Left colon (tissue), 2 donors: ENCODE measurements at regions of chr6 and their contacts with region 1.

Region 1: DNA sequence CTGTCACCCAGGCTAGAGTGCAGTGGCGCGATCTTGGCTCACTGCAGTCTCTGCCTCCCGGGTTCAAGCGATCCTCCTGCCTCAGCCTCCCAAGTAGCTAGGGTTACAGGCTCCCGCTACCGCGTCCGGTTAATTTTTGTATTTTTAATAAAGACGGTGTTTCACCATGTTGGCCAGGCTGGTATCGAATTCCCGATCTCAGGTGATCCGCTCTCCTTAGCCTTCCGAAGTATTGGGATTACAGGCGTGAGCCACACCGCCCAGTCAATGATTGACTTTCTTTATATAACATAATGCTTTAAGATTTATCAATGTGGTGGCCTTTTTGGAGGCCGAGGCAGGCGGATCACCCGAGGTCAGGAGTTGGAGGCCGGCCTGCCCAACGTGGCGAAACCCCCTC is 7.8 kb upstream of the ABT1 start:
- DNase-seq: no peak
- ATAC-seq: no peak

Region 2: GRCh38 chr6:26349964-26350857 is 238.8 kb before region 1 on chr6:
- intact Hi-C with region 1: loop called in 1 of 2 experiments (anchors 5 kb)
- DNase-seq: no peak
- ATAC-seq: no peak